Aorta (tissue), 5 donors: ENCODE measurements at regions of chr17 and their contacts with region 1.

Region 1: DNA sequence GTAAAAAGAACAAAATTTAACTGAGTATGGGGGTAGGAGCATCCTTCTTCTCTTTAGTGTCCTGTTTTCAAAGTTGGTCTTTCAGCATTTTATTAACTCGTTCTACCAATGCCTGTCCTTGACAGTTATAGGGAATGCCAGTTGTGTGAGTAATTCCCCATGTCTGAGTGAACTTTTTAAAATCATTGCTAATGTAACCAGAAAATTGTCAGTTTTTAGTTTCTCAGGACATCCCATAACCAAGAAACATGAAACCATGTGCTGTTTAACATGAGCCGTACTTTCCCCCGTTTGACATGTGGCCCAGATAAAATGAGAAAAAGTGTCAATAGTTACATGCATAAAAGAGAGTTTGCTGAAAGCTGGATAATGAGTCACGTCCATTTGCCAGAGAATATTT is 71.4 kb upstream of the ARL4D start:
- DNase-seq: no peak
- ATAC-seq: no peak
- H3K4me3 ChIP-seq: no peak overlapping the region
- H3K27ac ChIP-seq: no peak overlapping the region
- H3K4me1 ChIP-seq: no peaks in the 10 kb centered on the region
- H3K27me3 ChIP-seq: no peaks in the 10 kb centered on the region

Region 2: GRCh38 chr17:43018008-43018853 is 309.2 kb before region 1 on chr17:
- intact Hi-C with region 1: loop called in 1 of 2 experiments (anchors 5 kb)
- DNase-seq: peak; percentile 42 to 58
- ATAC-seq: no peak
- H3K4me3 ChIP-seq: no peak overlapping the region
- H3K27ac ChIP-seq: no peak overlapping the region
- H3K4me1 ChIP-seq: no peaks in the 10 kb centered on the region
- H3K27me3 ChIP-seq: no peaks in the 10 kb centered on the region